ENCODE measurements at regions of chr14 and their contacts with region 1.

Region 1: GRCh38 chr14:53126731-53127130 is 26.4 kb downstream of the DDHD1 start:
- DNase-seq: no peak
- ATAC-seq: peak; percentile 33
- H3K4me3 Mint-ChIP-seq: peak overlapping the region; percentile 76
- H3K27ac Mint-ChIP-seq: peak overlapping the region; percentile 87
- H3K4me1 Mint-ChIP-seq: peaks cover 18% of the 10 kb centered on the region
- H3K27me3 Mint-ChIP-seq: no peaks in the 10 kb centered on the region
- CTCF ChIP-seq: no peak

Region 2: DNA sequence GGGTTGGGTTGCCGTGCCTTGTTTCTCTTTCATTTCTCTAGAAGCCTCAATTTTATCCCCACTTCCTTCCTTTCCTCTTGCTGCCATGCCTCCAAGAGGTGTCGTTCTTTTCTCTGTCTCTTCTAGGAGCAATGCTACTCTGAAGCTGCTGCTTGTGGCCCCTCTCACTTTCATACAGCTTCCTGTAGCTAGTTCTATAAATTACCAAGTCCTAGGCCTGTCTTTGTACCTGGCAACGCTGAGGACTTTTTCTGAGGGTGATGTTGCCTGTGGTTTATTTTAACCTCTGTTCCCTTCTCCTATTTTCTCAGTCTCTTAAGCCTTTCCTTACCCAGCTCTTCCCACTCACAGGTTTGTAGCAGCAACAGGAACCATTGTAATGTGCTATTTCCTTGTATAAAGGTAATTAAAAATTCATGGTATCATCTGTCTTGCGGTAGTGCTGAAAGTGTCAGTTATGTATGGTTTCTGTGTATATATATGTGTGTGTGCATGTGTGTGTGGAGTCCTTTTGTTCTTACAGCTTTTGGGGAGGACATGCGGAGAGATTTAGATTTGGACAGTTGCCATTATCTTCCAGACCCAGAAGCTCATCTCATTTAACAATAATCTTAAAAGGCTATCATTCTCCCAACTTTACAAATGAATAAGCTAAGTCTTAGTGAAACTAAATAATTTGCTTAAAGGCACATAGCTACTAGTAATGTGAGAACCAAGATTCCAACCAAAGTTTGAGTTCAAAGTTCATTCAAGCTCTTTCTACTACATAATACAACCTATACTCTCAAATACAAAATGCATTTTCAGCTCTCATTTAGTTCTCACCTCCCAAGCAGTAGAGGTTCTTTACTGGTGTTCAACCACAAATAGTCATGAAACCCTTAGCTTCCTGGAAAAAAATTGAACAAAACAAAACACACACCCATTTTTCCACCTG is 17.4 kb before region 1 on chr14:
- CTCF ChIA-PET with region 1: no interaction called
- POLR2A ChIA-PET with region 1: interaction called, 6 read pairs
- intact Hi-C with region 1: loop called (anchors 2 kb)
- DNase-seq: no peak
- ATAC-seq: peak; percentile 42
- H3K4me3 Mint-ChIP-seq: no peak overlapping the region
- H3K27ac Mint-ChIP-seq: no peak overlapping the region
- H3K4me1 Mint-ChIP-seq: peaks cover under 1% of the 10 kb centered on the region
- H3K27me3 Mint-ChIP-seq: no peaks in the 10 kb centered on the region
- CTCF ChIP-seq: no peak

Region 3: DNA sequence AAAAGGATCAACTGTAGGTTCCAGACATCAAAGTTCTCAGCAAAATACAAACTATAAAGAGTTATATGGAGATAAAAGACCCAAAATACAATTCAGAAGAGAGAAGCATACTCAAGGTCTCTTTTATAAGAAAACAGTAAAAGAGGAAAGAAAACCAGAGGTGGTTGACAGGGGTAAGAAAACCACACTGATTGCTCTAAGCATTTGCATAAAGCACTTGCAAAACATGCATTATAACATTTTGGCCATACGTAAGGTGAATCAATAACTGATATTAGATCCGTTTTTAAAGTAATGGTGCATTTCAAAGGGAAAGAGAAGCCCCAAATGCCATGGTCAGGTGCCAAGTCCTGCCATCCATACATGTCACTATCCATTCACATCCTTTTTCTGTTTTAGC is 20.5 kb after region 1 on chr14:
- CTCF ChIA-PET with region 1: interaction called, 3 read pairs
- POLR2A ChIA-PET with region 1: interaction called, 11 read pairs
- intact Hi-C with region 1: loop called (anchors 1 kb)
- DNase-seq: no peak
- ATAC-seq: no peak
- H3K4me3 Mint-ChIP-seq: peak overlapping the region; percentile 70
- H3K27ac Mint-ChIP-seq: peak overlapping the region; percentile 71
- H3K4me1 Mint-ChIP-seq: peaks cover 75% of the 10 kb centered on the region
- H3K27me3 Mint-ChIP-seq: no peaks in the 10 kb centered on the region
- CTCF ChIP-seq: no peak

Measured in activated B cell treated with CpG ODN at 0.5 μM for 24 hours (primary cell).